Calu3 (cell line): ENCODE measurements at regions of chr19 and their contacts with region 1.

Region 1: GRCh38 chr19:48993175-48994034 is at the starts of genes GYS1 and RUVBL2:
- DNase-seq: peak; percentile 100
- H3K4me3 Mint-ChIP-seq: peak within 1 kb of the TSS; percentile 92
- H3K27ac Mint-ChIP-seq: peak within 1 kb of the TSS; percentile 94
- H3K4me1 Mint-ChIP-seq: peaks cover 44% of the 10 kb centered on the region
- H3K27me3 Mint-ChIP-seq: no peaks in the 10 kb centered on the region
- CTCF ChIP-seq: peak; percentile 98
- total RNA-seq, gene GYS1: 59.6 and 64.7 TPM in 2 replicates
- total RNA-seq, gene RUVBL2: 184 and 199 TPM in 2 replicates

Region 2: DNA sequence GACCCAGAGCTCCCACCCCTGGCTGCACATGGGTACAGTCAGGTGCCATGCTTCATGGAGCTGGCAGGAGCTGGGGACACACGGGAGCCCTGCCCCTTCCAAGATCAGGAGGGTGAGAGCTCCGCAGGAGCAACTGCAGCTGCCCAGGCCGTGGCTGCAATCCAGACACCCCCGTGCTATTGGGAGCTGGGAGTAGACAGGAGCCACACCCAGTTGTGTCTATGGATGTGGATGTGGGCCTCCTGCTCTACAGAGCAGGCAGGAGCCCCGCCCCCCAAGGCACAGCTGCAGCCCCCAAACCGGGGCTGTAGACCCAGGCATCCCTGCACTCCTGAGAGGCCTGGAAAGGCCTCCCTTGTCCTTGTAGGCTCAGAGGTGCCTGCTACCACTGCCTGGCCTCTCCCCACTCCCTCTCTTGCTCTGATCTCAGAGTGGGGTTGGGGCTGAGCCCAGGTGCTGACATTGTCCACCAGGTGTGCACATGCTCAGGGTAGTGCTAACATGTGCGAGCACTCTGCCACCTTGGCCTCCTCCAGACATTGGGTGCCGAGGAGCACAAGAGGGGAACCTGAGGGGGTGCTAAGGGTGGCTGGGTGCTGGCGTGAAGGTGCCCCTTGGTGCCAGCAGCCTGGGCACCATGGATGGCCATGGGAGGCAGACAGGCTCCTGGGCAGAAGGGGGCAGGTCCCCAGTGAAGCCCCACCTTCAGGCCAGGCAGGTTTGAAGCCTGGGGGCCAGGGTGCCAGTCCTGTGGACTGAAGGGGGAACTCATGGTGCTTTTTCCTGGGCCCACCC is 46.7 kb before region 1 on chr19:
- CTCF ChIA-PET with region 1: no interaction called
- intact Hi-C with region 1: no loop called
- DNase-seq: no peak
- H3K4me3 Mint-ChIP-seq: no peak overlapping the region
- H3K27ac Mint-ChIP-seq: no peak overlapping the region
- H3K4me1 Mint-ChIP-seq: no peaks in the 10 kb centered on the region
- H3K27me3 Mint-ChIP-seq: no peaks in the 10 kb centered on the region
- CTCF ChIP-seq: no peak

Region 3: DNA sequence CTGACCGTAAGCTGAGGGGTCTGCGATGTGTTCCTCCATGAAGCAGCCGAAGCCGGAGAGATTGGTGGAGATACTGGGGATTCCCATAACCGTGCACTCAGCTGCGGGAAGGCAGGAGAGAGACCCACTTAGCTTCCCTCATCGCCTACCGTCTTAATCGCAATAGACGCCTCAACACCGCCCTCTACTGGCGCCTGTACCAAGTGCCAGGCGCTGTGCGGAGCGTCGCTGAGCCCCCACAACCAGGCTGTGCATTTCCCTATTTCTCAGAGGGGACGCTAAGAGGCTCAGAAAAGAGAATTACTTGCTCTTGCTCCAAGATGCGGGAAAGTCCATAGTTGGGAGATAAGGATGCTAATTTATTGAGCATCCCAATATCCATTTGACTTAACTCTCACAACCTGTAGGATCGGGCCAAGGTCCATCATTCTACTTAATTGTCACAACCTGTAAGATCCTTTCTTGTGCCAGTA is 22.4 kb before region 1 on chr19:
- CTCF ChIA-PET with region 1: interaction called, 16 read pairs
- intact Hi-C with region 1: no loop called
- DNase-seq: peak; percentile 85
- H3K4me3 Mint-ChIP-seq: no peak overlapping the region
- H3K27ac Mint-ChIP-seq: no peak overlapping the region
- H3K4me1 Mint-ChIP-seq: no peaks in the 10 kb centered on the region
- H3K27me3 Mint-ChIP-seq: no peaks in the 10 kb centered on the region
- CTCF ChIP-seq: peak; percentile 95

Region 4: DNA sequence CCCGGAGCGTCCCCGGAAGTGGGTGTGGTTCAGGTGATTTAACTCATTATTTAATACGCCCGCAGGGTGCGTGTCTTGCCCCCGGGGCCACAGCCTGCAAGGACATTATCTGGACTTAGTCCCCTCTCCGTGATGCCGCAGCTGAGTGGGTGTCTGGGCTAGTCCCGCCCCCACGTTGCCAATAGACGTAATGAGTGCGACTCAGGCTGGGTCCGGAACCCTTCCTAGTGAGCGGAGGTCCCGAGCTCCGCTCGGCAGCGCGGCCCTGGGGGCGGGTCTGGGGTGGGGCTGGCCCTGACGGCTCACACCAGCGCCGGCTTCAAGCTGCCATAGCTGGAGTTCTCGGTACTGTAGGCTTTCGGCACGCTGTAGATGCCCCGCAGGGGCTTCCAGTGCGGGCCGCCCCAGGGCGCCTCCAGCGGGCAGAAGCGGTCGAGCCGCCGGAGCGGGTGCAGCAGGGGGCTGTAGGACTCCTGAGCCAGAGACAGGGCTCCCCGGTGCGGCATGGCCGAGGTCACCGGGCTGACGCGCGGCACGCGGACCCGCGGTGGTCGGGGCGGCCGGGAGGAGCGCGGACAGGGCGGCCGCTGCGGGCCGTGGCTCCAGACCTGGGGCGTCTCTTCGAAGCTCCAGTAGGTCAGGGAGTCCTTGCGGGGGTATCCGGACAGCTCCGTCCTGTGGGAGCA is 24.4 kb after region 1 on chr19:
- CTCF ChIA-PET with region 1: interaction called, 10 read pairs
- intact Hi-C with region 1: no loop called
- DNase-seq: peak; percentile 76
- H3K4me3 Mint-ChIP-seq: peak overlapping the region; percentile 62
- H3K27ac Mint-ChIP-seq: no peak overlapping the region
- H3K4me1 Mint-ChIP-seq: peaks cover 30% of the 10 kb centered on the region
- H3K27me3 Mint-ChIP-seq: peaks cover 26% of the 10 kb centered on the region
- CTCF ChIP-seq: peak; percentile 60

Region 5: DNA sequence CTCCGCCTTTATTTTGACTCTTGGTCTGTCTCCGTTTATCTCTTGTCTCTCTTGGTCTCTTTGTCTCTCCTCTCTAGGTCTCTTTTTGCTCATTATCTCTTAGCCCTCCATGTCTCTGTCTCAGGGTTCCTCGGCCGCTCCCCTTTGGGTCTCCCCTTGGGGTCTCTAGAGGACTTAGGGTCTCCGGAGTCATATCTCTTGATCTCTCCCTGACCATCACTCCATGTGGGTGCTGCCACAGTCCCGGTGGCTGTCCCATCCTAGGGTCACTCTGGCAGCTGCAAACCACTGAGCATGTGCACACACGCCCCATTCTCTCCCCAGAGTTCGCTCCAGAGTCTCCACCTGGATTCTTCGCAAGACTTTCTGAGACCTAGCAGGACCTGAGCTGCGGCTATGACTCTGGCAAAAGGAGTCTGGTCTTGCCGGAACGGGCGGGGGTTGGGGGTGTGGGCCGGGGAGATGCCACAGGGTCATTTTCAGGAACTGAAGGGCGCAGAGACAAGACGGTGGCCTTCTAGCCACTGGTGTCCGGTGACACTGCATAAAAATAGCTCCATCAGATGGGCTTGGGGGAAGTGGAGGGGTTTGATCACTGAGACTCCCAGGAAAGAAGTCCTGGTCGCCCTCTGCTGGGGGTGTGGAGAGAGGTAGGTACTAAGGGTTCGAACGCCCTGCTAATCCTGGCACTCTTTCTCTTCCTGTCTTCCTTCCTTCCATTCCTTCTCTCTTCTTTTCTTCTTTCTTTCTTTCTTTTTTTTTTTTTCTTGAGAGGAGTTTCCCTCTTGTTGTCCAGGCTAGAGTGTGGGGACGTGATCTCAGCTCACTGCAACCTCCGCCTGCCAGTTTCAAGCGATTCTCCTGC is 80.3 kb after region 1 on chr19:
- CTCF ChIA-PET with region 1: interaction called, 12 read pairs
- intact Hi-C with region 1: no loop called
- DNase-seq: peak; percentile 74
- H3K4me3 Mint-ChIP-seq: peak overlapping the region; percentile 2
- H3K27ac Mint-ChIP-seq: no peak overlapping the region
- H3K4me1 Mint-ChIP-seq: peaks cover 29% of the 10 kb centered on the region
- H3K27me3 Mint-ChIP-seq: peaks cover 48% of the 10 kb centered on the region
- CTCF ChIP-seq: peak; percentile 58

Region 6: DNA sequence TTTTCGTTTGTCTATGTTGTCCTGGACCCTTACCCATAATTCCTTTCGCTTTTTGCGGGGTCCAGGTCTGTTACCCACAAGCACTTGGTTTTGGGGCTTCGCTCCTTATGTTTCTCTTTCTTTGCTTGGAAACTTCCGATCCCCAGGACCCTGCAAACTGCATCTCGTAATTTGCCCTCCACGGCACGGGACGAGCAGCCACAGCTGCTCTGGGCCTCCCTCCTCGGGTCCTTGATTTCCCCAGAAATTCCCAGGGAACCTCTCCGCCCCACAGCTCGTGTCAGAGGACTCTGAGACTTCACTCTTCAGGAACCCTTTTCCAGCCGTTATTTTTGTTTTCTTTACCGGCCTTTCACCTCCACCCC is 92.4 kb after region 1 on chr19:
- CTCF ChIA-PET with region 1: no interaction called
- intact Hi-C with region 1: no loop called
- DNase-seq: no peak
- H3K4me3 Mint-ChIP-seq: peak overlapping the region; percentile 92
- H3K27ac Mint-ChIP-seq: peak overlapping the region; percentile 93
- H3K4me1 Mint-ChIP-seq: peaks cover 30% of the 10 kb centered on the region
- H3K27me3 Mint-ChIP-seq: no peaks in the 10 kb centered on the region
- CTCF ChIP-seq: no peak

Region 7: DNA sequence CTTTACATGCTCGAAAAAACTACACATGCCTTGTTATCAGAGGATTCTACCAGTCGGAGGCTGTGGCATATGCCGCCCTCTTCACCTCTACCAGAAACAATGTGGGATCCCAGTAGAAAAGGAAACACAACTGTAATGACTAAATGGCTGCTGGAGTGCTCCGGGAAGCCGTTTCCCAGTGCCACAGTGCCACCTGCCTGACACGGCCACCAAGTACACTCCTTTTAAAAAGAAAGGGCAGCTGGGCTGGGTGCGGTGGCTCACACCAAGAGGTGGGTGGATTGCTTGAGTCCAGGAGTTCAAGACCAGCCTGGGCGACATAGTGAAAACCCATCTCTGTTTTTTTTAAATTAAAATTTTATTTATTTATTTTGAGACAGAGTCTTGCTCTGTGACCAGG is 231.5 kb after region 1 on chr19:
- CTCF ChIA-PET with region 1: interaction called, 8 read pairs
- intact Hi-C with region 1: loop called (anchors 10 kb)
- DNase-seq: peak; percentile 86
- H3K4me3 Mint-ChIP-seq: no peak overlapping the region
- H3K27ac Mint-ChIP-seq: no peak overlapping the region
- H3K4me1 Mint-ChIP-seq: peaks cover 9% of the 10 kb centered on the region
- H3K27me3 Mint-ChIP-seq: no peaks in the 10 kb centered on the region
- CTCF ChIP-seq: peak; percentile 73

Region 8: DNA sequence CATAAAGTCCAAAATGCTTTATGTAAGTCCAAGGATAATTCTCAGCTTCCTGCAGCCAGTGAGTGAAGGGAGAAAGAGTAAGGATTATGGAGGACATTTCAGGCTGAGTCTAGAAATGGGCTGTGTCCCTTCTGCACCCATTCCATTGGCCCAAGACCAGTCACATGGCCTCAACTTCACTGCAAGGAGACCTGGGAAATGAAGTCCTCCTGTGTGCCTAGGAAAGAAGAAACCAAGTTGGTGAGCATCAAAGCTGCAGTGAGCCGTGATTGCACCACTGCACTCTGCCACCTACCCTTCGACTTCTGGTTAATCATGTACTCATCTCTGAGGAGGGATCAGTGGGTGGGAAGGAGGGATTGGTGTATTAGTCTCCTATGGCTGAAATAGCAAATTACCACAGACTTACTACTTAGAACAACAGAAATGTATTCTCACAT is 338.2 kb after region 1 on chr19:
- CTCF ChIA-PET with region 1: no interaction called
- intact Hi-C with region 1: no loop called
- DNase-seq: peak; percentile 52
- H3K4me3 Mint-ChIP-seq: no peak overlapping the region
- H3K27ac Mint-ChIP-seq: no peak overlapping the region
- H3K4me1 Mint-ChIP-seq: no peaks in the 10 kb centered on the region
- H3K27me3 Mint-ChIP-seq: peaks cover 60% of the 10 kb centered on the region
- CTCF ChIP-seq: no peak